ENCODE measurements at regions of chr19 and their contacts with region 1.

Region 1: GRCh38 chr19:54137086-54137921 is at the start of gene CNOT3:
- DNase-seq: peak; percentile 95 to 100 (median 99)
- ATAC-seq: peak; percentile 80 to 84 (median 81)
- H3K4me3 ChIP-seq: peak within 1 kb of the TSS; percentile 67 to 73
- H3K4me3 Mint-ChIP-seq: peak within 1 kb of the TSS; percentile 78 to 88 (median 87)
- H3K27ac ChIP-seq: peak within 1 kb of the TSS; percentile 70
- H3K27ac Mint-ChIP-seq: peak within 1 kb of the TSS; percentile 90 to 92
- H3K4me1 ChIP-seq: peaks cover 13 to 51% of the 10 kb centered on the region in 2 experiments
- H3K4me1 Mint-ChIP-seq: peaks cover 49 to 55% (median 52%) of the 10 kb centered on the region in 3 donors
- H3K27me3 ChIP-seq: peaks cover 0 to 5% of the 10 kb centered on the region in 2 experiments
- H3K27me3 Mint-ChIP-seq: no peaks in the 10 kb centered on the region
- total RNA-seq, gene CNOT3: 45.9 to 83.1 (median 77.0) TPM

Region 2: DNA sequence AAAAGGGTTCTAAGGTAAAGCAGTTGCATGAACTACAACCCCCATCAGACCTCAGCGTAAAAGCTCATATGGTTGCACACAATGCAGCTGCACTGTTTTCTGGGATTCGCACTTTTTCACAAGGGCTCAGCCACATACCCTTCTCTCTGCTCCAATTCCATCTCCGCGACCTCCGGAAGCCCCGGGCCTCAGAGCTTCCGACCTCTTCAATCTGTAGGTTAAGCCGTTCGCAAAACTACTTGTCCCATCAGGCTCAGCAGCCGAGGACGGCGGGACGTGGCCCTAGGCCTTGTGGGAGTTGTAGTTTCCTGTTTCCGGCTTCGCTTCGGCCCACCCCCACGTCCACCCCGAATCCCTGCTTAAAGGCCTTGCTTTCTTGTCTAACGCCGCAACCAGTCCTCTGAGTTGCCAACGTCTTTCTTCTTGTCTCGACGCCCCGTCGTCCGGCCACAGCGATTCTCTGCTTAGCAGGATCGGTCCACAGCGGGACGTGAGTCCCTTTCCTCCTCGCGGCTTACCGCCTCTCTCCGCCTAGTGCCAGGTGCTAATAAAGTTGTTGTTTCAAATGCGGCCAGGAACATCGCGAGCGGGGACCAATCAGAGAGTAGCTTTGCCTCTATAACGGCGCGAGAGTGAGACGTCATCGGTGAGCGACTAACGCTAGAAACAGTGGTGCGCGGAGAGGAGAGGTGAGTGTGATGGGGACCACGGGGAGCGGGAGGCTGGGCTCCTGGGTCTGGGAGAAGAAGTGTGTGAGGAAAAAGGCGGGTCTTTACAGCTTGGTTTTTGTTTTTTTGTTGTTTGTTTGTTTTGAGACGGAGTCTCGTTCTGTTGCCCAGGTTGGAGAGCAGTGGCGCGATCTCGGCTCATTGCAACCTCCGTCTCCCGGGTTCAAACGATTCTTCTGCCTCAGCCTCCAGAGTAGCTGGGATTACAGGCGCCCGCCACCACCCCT is 21.9 kb before region 1 on chr19 and contains the starts of genes PRPF31 and TFPT:
- CTCF ChIA-PET with region 1: interaction called in 1 of 2 experiments, 14 read pairs
- POLR2A ChIA-PET with region 1: interaction called, 3 to 6 read pairs
- DNase-seq: peak; percentile 92 to 99 (median 95)
- ATAC-seq: peak; percentile 89 to 91 (median 90)
- H3K4me3 ChIP-seq: peak within 1 kb of the TSS; percentile 82 to 98
- H3K4me3 Mint-ChIP-seq: peak within 1 kb of the TSS; percentile 84 to 91 (median 89)
- H3K27ac ChIP-seq: peak within 1 kb of the TSS; percentile 78
- H3K27ac Mint-ChIP-seq: peak within 1 kb of the TSS; percentile 86 to 98
- H3K4me1 ChIP-seq: peaks cover 3 to 35% of the 10 kb centered on the region in 2 experiments
- H3K4me1 Mint-ChIP-seq: peaks cover 32 to 44% (median 40%) of the 10 kb centered on the region in 3 donors
- H3K27me3 ChIP-seq: no peaks in the 10 kb centered on the region
- H3K27me3 Mint-ChIP-seq: no peaks in the 10 kb centered on the region
- total RNA-seq, gene PRPF31: 56.3 to 75.3 (median 69.8) TPM
- total RNA-seq, gene TFPT: 12.0 to 27.0 (median 20.7) TPM

Region 3: GRCh38 chr19:54159352-54160181 is 22.3 kb after region 1 on chr19 and contains the start of gene LENG1:
- CTCF ChIA-PET with region 1: interaction called in 1 of 2 experiments, 13 read pairs
- POLR2A ChIA-PET with region 1: interaction called in 1 of 2 experiments, 16 read pairs
- DNase-seq: peak; percentile 92 to 100 (median 99)
- ATAC-seq: peak; percentile 87 to 89 (median 88)
- H3K4me3 ChIP-seq: peak within 1 kb of the TSS; percentile 84
- H3K4me3 Mint-ChIP-seq: peak within 1 kb of the TSS; percentile 94 to 100 (median 100)
- H3K27ac ChIP-seq: peak within 1 kb of the TSS; percentile 80
- H3K27ac Mint-ChIP-seq: peak within 1 kb of the TSS; percentile 100
- H3K4me1 ChIP-seq: peaks cover 31 to 86% of the 10 kb centered on the region in 2 experiments
- H3K4me1 Mint-ChIP-seq: peaks cover 62 to 78% (median 68%) of the 10 kb centered on the region in 3 donors
- H3K27me3 ChIP-seq: peaks cover 0 to 12% of the 10 kb centered on the region in 2 experiments
- H3K27me3 Mint-ChIP-seq: no peaks in the 10 kb centered on the region
- total RNA-seq, gene LENG1: 8.4 to 21.5 (median 19.2) TPM

Region 4: DNA sequence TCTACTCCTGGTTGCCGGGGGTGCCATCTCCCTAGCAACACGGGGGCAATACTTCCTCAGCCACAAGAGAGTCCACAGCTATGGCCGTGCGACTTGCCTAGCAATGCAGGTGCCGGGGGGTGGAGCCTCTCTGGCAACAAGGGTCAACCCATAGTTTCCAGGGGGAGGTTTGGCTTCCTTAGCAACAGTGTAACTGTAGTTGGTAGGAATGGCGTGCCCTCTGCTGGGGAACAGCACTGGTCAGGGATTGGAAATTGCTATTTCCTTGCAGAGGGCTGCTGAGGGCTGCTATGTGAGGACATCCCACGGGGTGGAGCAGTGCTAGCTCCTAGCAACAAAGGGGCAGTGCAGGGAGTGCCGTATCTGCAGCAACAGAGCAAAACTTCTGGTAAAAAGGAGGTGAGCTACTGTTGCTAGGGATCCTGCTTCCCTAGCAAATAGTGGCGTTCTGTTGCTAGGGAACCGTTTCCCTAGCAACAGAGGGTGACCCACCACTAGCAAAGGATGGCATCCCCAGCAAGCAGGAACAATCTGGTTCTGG is 42.7 kb after region 1 on chr19:
- CTCF ChIA-PET with region 1: no interaction called
- POLR2A ChIA-PET with region 1: no interaction called
- DNase-seq: no peak
- ATAC-seq: no peak
- H3K4me3 ChIP-seq: no peak overlapping the region
- H3K4me3 Mint-ChIP-seq: no peak overlapping the region
- H3K27ac ChIP-seq: no peak overlapping the region
- H3K27ac Mint-ChIP-seq: no peak overlapping the region
- H3K4me1 ChIP-seq: no peaks in the 10 kb centered on the region
- H3K4me1 Mint-ChIP-seq: no peaks in the 10 kb centered on the region
- H3K27me3 ChIP-seq: no peaks in the 10 kb centered on the region
- H3K27me3 Mint-ChIP-seq: no peaks in the 10 kb centered on the region